ENCODE measurements at regions of chr1 and their contacts with region 1.

Region 1: DNA sequence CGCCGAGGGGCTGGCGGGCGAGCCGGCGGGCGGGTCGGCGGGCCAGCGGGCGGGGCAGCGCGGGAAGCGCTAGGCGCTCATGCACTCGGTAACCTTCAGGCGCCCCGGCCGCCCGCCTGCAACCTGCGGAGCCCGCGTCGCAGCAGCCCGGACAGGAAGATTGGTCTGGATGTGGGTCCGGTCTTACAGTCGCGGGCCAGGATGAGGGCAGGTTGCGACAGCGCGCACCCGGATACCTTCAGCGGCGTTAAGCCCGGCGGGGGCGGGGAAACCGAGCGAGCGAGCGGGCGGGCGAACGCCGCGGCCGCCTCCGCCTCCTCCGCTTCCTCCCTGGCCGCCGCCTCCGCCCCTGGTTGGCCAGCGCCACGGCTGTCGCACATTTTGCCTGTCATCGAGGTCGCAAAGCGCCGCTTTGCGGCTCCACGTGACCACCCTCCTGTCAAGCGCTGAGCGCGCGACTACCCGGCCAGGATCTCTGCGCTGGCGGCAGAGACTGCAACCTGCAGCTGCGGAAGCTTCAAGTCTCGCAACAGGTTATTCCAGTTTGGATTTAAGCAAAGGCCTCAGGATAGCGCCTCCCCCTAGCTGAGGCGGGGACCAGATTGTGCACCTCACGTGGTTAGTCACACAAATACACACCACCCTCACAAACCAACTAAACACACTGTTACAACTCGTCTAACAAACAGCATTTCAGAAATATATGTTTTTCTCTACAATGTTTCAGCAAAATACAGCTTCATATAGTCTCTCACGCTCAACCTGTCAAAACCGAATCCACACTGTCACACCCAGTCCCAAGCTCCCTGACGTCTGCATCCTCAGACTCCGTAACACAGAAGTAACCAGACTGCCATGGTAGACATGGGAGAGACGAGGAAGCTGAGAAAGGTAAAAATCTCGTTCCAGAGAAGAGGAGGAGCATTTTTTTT is at the start of gene FAF1:
- DNase-seq: peak; percentile 98
- H3K4me3 ChIP-seq: peak within 1 kb of the TSS; percentile 69 to 80 (median 72)
- H3K27ac ChIP-seq: peak within 1 kb of the TSS; percentile 83 to 91 (median 88)
- H3K4me1 ChIP-seq: peaks cover 0 to 20% (median 17%) of the 10 kb centered on the region in 4 donors
- H3K27me3 ChIP-seq: no peaks in the 10 kb centered on the region
- CTCF ChIP-seq: peak in 3 of 4 experiments; percentile 23 to 40 (median 28)
- EP300 ChIP-seq: peak in 1 of 4 donors; percentile 67
- POLR2A ChIP-seq: peak; percentile 93 to 94
- total RNA-seq, gene FAF1: 53.9 to 59.3 (median 55.6) TPM

Region 2: GRCh38 chr1:50542362-50542761 is 417.8 kb before region 1 on chr1:
- intact Hi-C with region 1: no loop called
- DNase-seq: no peak
- H3K4me3 ChIP-seq: no peak overlapping the region
- H3K27ac ChIP-seq: no peak overlapping the region
- H3K4me1 ChIP-seq: no peaks in the 10 kb centered on the region
- H3K27me3 ChIP-seq: no peaks in the 10 kb centered on the region
- CTCF ChIP-seq: no peak
- EP300 ChIP-seq: no peak
- POLR2A ChIP-seq: no peak

Region 3: GRCh38 chr1:51878616-51879336 is 918.6 kb after region 1 on chr1 and contains the start of gene NRDC:
- intact Hi-C with region 1: loop called (anchors 10 kb)
- DNase-seq: peak; percentile 100
- H3K4me3 ChIP-seq: peak within 1 kb of the TSS; percentile 89 to 97 (median 92)
- H3K27ac ChIP-seq: peak within 1 kb of the TSS; percentile 94 to 99 (median 98)
- H3K4me1 ChIP-seq: peaks cover 0 to 44% (median 28%) of the 10 kb centered on the region in 4 donors
- H3K27me3 ChIP-seq: peaks cover 0 to 8% (median 0%) of the 10 kb centered on the region in 3 donors
- CTCF ChIP-seq: no peak
- EP300 ChIP-seq: peak in 1 of 4 donors; percentile 46
- POLR2A ChIP-seq: peak; percentile 94 to 95
- total RNA-seq, gene NRDC: 71.0 to 91.4 (median 81.4) TPM

Measured in sigmoid colon (tissue), 7 donors.